ENCODE measurements at regions of chr7 and their contacts with region 1.

Region 1: DNA sequence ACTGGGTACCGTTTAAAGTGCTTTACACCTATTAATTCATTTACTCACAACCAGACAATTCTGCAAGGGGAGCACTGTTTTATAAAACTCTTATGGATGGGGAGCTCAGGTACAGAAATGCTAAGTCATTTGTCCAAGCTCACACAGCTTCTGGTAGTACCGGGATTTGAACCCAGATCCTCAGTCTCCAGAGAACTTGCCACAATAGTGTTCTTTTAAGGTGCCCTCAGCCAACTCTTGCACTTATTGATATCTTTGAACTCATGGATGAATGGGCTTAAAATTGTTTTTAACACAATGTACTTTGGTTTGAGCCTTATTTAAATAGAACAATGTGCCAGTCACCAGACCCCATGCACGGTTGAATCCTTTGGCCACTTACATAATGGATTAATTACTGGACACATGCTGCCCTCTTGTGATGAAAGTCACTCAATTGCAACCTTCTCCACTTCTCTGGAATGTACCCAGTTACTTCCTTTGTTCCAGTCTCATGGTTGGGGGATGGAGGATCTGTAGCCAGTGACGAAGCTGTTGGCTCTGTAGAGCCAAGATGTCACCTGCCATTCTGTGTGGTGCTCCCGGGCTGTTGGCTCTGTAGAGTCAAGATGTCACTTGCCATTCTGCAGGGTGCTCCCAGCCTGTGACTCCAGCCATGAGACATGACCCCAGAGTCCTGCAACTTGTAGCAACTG is 65.6 kb downstream of the NOD1 start:
- DNase-seq: peak; percentile 90
- H3K4me3 ChIP-seq: no peak overlapping the region
- H3K27ac ChIP-seq: no peak overlapping the region
- H3K4me1 ChIP-seq: no peaks in the 10 kb centered on the region
- H3K27me3 ChIP-seq: no peaks in the 10 kb centered on the region
- CTCF ChIP-seq: peak; percentile 57 to 62
- POLR2A ChIP-seq: no peak

Region 2: DNA sequence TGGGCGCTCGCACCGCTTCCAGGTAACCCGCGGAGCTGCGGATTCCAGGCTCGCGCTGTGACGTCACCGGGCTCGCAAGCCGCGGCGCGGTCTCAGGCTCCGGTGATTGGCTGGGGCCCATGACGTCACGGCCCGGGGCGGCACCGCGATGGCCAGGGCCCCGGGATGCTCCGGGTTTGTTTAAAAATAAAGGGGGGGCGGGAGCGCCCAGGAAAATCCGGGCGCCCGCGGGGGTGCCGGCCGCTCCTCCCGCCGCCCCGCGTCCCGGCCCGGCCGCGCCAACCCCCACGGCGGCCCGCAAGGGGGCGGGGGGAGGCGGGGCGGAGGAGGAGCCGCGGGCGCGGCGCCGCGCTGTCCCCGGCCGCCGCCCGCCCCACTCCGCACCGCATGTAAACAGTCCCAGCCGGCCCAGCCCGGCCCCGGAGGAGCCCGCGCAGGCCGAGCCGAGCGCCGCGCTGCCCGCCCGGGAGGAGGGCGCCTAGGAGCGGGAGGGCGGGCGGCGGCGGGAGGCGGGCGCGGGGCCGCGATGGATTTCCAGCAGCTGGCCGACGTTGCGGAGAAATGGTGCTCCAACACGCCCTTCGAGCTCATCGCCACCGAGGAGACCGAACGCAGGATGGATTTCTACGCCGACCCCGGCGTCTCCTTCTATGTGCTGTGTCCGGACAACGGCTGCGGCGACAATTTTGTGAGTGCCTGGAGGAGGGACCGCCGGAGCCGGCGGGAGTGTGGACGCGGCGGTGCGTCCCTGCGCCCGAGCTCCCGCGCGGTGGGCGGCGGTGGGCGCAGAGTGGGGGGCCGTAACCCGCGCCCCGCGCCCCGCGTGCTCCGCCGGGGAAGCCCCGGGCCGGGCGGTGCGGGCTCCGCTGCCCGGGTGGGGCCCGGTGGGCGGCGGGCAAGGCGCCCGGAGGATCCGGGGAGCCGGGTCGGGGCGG is 278.1 kb before region 1 on chr7 and contains the start of gene MTURN:
- CTCF ChIA-PET with region 1: interaction called, 3 read pairs
- POLR2A ChIA-PET with region 1: no interaction called
- dilution Hi-C with region 1: no loop called
- intact Hi-C with region 1: loop called (anchors 1 kb)
- DNase-seq: peak; percentile 75
- H3K4me3 ChIP-seq: peak within 1 kb of the TSS; percentile 59 to 83 (median 59)
- H3K27ac ChIP-seq: peak within 1 kb of the TSS; percentile 41
- H3K4me1 ChIP-seq: peaks cover 6% of the 10 kb centered on the region
- H3K27me3 ChIP-seq: peaks cover 0 to 4% of the 10 kb centered on the region in 2 experiments
- CTCF ChIP-seq: no peak
- POLR2A ChIP-seq: no peak
- total RNA-seq, gene MTURN: 4.8 and 6.6 TPM in 2 replicates

Region 3: DNA sequence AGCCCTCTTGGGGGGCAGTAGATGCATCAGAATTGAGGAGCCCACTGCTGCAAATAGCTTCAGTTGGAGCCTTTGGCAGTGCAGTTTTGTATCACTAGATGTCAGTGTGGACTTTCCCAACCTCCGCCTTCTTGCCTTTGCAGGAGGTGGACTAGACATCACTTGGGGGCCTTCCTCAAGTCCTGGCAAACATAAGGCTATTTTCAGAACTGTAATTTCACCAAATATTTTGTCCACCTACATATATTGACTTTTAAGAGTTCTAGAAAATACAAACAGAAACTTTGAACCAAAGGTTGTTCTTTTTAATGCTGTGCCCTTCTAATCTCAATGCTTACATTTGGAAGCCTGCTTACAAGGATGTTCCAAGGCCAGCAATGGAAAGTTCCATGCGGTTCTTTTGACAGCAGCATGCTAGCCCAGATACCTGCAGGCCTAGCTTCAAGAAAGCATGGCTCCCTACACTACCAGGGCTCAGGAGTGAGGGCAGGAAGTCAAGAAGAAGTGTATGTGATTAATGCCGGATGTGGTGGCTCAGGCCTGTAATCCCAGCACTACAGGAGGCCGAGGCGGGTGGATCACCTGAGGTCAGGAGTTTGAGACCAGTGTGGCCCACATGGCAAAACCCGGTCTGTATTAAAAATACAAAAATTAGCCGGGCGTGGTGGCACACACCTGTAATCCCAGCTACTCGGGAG is 136.6 kb before region 1 on chr7:
- CTCF ChIA-PET with region 1: interaction called, 96 read pairs
- POLR2A ChIA-PET with region 1: no interaction called
- dilution Hi-C with region 1: no loop called
- intact Hi-C with region 1: loop called (anchors 1 kb)
- DNase-seq: peak; percentile 69
- H3K4me3 ChIP-seq: no peak overlapping the region
- H3K27ac ChIP-seq: no peak overlapping the region
- H3K4me1 ChIP-seq: no peaks in the 10 kb centered on the region
- H3K27me3 ChIP-seq: peaks cover 0 to 2% of the 10 kb centered on the region in 2 experiments
- CTCF ChIP-seq: peak; percentile 52 to 72
- POLR2A ChIP-seq: no peak